ENCODE measurements at regions of chr4 and their contacts with region 1.

Region 1: GRCh38 chr4:69167300-69167699 is 47.2 kb downstream of the UGT2B11 start:
- DNase-seq: no peak
- H3K4me3 ChIP-seq: no peak overlapping the region
- H3K27ac ChIP-seq: no peak overlapping the region
- H3K4me1 ChIP-seq: no peaks in the 10 kb centered on the region
- H3K27me3 ChIP-seq: no peaks in the 10 kb centered on the region
- CTCF ChIP-seq: no peak

Region 2: DNA sequence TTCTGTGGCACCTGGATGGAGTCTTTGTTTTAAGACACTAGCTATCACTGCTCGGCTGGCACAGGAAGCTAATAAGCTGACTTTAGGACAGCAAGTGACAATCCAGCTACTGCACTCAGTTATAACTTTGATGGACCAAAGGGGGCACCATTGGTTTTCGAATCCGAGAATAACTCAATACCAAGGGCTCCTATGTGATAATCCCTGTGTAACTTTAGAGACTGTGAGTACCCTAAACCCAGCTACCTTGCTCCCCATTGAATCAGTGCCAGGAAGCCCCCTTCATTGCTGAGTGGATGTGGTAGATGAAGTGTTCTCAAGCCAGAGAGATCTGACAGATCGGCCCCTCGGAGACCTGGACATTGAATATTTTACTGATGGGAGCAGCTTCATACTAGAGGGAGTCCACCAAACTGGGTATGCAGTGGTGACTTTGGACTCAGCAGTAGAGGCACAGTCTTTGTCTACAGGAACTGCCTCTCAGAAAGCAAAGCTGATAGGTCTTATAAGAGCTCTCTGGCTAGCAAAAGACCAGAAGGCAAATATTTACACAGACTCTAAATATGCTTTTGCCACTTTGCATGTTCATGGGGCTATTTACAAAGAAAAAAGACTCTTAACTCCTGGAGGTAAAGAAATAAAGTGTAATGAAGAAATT is 106.5 kb before region 1 on chr4:
- CTCF ChIA-PET with region 1: no interaction called
- POLR2A ChIA-PET with region 1: no interaction called
- intact Hi-C with region 1: loop called (anchors 5 kb)
- DNase-seq: peak; percentile 27
- H3K4me3 ChIP-seq: no peak overlapping the region
- H3K27ac ChIP-seq: no peak overlapping the region
- H3K4me1 ChIP-seq: no peaks in the 10 kb centered on the region
- H3K27me3 ChIP-seq: no peaks in the 10 kb centered on the region
- CTCF ChIP-seq: no peak

Measured in A673 (cell line).